Activated CD4-positive, alpha-beta T cell treated with anti-CD3 and anti-CD28 coated beads for 36 hours (primary cell): ENCODE measurements at regions of chr11 and their contacts with region 1.

Region 1: DNA sequence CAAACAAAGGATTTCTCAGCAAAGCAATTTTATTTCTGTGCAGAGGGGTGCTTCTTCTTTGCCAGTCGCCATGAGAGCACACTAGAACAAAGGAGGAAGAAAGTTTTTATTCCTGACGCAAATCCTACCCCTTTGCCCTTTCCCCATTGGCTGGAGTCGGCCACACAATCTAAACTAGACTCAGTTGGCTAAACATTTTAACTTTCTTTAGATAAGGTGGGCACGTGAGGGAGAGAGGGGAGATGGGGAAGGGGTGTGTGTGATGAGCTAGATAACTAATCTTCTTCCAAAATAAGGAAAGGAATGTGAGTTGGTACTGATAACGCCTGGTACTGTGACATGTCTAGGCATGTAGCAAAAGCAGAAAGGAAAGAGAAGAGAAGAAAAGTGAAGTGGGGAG is 626 bp downstream of the TRIM22 start:
- DNase-seq: no peak
- ATAC-seq: no peak
- H3K4me3 Mint-ChIP-seq: peak overlapping the region; percentile 77
- H3K27ac Mint-ChIP-seq: peak overlapping the region; percentile 94
- H3K4me1 Mint-ChIP-seq: peaks cover 55% of the 10 kb centered on the region
- H3K27me3 Mint-ChIP-seq: no peaks in the 10 kb centered on the region

Region 2: DNA sequence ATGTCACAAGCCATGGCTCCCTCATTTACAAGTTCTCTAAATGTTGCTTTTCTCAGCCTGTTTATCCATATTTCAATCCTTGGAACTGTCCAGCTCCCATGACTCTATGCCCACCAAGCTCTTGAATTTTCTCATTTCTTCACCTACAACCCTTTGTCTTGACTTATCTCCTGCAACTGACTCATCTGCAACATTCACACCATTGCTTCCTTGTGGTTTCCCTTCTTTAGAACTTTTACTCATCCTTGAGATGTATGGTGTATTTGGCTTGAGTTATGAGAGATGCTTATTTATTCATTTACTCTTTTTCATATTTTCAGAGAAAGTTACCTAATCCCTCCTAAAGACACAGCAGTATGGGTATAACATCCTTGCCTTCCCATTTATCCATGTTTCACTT is 46.6 kb before region 1 on chr11:
- CTCF ChIA-PET with region 1: no interaction called
- POLR2A ChIA-PET with region 1: no interaction called
- intact Hi-C with region 1: loop called in 1 of 2 experiments (anchors 5 kb)
- DNase-seq: no peak
- ATAC-seq: peak; percentile 96
- H3K4me3 Mint-ChIP-seq: no peak overlapping the region
- H3K27ac Mint-ChIP-seq: no peak overlapping the region
- H3K4me1 Mint-ChIP-seq: peaks cover 8% of the 10 kb centered on the region
- H3K27me3 Mint-ChIP-seq: no peaks in the 10 kb centered on the region

Region 3: DNA sequence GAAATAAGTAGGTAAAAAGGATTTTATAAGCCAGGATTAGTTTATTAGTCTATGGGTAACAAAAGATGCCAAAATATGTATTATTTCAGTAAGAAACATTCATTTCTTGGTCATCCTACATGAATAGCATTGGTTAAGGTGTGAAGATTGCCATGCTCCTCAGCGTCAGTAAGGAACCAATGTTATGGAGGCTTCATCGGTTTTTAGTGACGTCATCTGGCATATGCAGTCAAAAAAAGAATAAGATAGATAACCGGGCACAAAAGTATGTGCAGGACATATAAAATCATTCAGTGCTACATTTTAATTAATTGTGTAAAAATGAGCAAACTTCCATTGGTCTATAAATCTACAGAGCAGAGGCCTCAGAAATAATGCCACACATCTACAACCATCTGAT is 34.7 kb before region 1 on chr11:
- CTCF ChIA-PET with region 1: no interaction called
- POLR2A ChIA-PET with region 1: no interaction called
- intact Hi-C with region 1: no loop called
- DNase-seq: no peak
- ATAC-seq: no peak
- H3K4me3 Mint-ChIP-seq: no peak overlapping the region
- H3K27ac Mint-ChIP-seq: no peak overlapping the region
- H3K4me1 Mint-ChIP-seq: no peaks in the 10 kb centered on the region
- H3K27me3 Mint-ChIP-seq: no peaks in the 10 kb centered on the region